Activated CD8-positive, alpha-beta T cell treated with anti-CD3 and anti-CD28 coated beads, Interleukin-2, amount 10 ng/mL, durations not matched to agents 7 days and 5 days (primary cell): ENCODE measurements at regions of chr11 and their contacts with region 1.

Region 1: DNA sequence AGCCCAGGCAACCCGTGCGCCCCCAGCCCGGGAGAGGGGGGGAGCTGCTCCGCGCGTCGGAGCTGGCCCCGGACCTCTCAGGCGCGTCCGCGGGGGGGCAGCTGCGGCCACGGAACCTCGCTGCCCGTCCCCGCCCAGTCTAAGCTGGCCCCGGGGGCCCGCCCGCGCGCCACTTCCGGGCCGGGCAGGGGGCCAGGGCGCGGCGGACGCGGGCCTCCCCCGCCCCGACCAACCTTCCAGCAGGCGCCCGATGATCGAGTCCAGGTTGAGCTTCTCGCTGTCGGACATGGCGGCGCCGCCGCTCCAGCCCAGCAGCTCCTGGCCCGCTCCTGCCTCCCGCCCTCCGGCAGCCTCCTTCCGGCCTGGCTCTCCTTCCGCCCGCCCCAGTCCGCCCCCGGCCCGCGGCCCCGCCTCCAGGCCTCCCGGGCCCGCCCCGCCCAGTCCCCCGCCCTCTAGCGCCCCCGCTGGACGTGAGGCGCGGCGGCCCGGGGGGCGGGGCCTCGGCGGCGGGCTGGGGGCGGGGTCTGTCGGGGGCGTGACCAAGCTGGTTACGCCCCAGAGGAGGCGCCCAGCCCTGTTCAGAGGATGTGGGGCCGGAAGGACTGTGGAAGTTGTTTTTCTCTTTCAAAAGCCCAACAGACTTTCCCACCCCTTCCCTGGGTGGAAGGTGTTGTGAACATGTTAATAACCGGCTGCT is at the start of gene PPP1CA:
- DNase-seq: peak; percentile 92
- ATAC-seq: peak; percentile 74
- H3K4me3 Mint-ChIP-seq: peak within 1 kb of the TSS; percentile 90
- H3K27ac Mint-ChIP-seq: peak within 1 kb of the TSS; percentile 93
- H3K4me1 Mint-ChIP-seq: peaks cover 65% of the 10 kb centered on the region
- H3K27me3 Mint-ChIP-seq: no peaks in the 10 kb centered on the region
- total RNA-seq, gene PPP1CA: 429 to 434 TPM

Region 2: GRCh38 chr11:67353317-67354074 is 48.1 kb before region 1 on chr11 and contains the start of gene POLD4:
- CTCF ChIA-PET with region 1: interaction called, 998 read pairs
- POLR2A ChIA-PET with region 1: interaction called, 7 read pairs
- DNase-seq: peak; percentile 96
- ATAC-seq: peak; percentile 92
- H3K4me3 Mint-ChIP-seq: peak within 1 kb of the TSS; percentile 93
- H3K27ac Mint-ChIP-seq: peak within 1 kb of the TSS; percentile 99
- H3K4me1 Mint-ChIP-seq: peaks cover 42% of the 10 kb centered on the region
- H3K27me3 Mint-ChIP-seq: peaks cover 12% of the 10 kb centered on the region
- total RNA-seq, gene POLD4: 53.2 to 56.7 TPM

Region 3: DNA sequence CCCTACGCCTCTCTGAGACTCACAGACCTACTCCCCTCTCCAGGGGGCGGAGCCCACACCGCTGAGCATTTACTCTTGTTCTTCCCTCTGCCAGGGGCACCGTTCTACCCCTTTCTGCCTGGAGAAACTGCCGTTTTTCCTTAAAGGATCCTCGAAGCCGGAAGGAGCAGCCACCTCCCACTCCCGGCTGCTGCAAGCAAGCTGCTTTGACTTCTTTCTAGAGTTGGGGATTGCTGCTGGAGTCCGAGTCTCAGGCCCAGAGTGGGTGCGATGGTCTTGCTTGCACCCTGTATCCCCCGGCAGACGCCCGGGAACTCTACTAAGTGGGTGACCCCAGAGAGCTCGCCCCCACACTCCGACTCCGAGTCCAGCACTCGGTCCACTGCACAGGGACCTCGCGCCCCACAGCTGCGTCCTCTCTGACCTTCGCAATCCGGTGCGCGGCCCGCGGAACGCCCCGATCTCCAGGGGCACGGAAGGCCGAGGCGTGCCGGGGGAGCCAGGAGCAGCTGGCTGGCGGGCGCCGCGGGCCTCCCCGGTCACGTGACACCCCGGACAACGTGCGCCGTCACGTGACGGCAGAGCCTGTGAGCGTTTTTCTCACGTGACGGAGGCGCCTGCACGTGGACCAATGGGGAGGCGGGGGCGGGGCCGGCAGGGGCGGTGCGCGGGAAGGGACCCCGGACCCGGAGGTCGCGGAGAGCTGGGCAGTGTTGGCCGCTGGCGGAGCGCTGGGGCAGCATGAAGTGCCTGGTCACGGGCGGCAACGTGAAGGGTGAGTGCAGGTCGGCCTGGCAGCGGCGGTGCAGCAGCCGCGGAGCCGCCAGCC is 10.1 kb before region 1 on chr11 and contains the start of gene RAD9A:
- CTCF ChIA-PET with region 1: interaction called, 32 read pairs
- POLR2A ChIA-PET with region 1: interaction called, 33 read pairs
- DNase-seq: peak; percentile 96
- ATAC-seq: peak; percentile 82
- H3K4me3 Mint-ChIP-seq: peak within 1 kb of the TSS; percentile 97
- H3K27ac Mint-ChIP-seq: peak within 1 kb of the TSS; percentile 83
- H3K4me1 Mint-ChIP-seq: peaks cover 51% of the 10 kb centered on the region
- H3K27me3 Mint-ChIP-seq: no peaks in the 10 kb centered on the region
- total RNA-seq, gene RAD9A: 59.5 to 60.4 TPM

Region 4: DNA sequence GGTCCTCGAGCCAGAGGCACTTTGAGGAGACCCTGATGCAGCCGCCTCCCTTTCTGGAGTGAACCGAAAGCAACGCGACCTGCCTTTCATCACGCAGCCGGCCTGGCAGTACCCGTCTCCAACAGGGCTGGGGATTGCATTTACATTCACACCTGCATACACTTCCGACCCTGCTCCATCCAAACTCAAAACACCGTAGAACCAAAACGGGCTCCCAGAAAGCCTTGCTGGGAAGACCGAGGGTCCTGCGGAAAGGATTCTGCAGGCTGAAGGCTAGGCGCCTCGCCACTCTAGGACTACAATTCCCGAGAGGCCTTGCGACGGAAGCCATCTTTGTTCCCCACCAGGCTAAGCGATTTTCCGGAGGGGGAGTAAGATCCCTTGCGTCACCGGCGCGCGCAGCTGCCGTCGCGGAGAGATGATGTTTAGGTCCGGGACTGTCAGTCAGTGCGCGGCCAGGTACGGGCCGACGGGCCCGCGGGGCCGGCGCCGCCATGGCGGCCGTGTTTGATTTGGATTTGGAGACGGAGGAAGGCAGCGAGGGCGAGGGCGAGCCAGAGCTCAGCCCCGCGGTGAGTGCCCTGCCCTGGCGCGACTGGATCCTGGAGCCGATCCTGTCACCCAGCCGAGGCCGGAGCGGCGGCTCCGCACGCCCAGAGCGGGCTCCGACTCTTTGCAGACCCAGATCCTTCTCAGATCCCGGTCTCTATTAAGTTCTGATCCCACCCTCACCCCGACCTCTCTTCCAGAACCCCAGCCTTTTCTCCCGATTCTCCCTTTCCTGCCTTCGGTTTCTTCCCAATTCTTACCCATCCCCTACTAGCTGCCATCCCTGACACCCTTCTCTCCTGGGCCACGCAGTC is 26.6 kb after region 1 on chr11 and contains the start of gene RPS6KB2:
- CTCF ChIA-PET with region 1: interaction called, 5 read pairs
- POLR2A ChIA-PET with region 1: interaction called, 48 read pairs
- DNase-seq: peak; percentile 100
- ATAC-seq: peak; percentile 94
- H3K4me3 Mint-ChIP-seq: peak within 1 kb of the TSS; percentile 98
- H3K27ac Mint-ChIP-seq: peak within 1 kb of the TSS; percentile 95
- H3K4me1 Mint-ChIP-seq: peaks cover 61% of the 10 kb centered on the region
- H3K27me3 Mint-ChIP-seq: no peaks in the 10 kb centered on the region
- total RNA-seq, gene RPS6KB2: 64.0 to 66.9 TPM

Region 5: GRCh38 chr11:67468835-67469811 is 67.5 kb after region 1 on chr11 and contains the start of gene TMEM134:
- CTCF ChIA-PET with region 1: interaction called, 13 read pairs
- POLR2A ChIA-PET with region 1: interaction called, 4 read pairs
- DNase-seq: peak; percentile 92
- ATAC-seq: peak; percentile 79
- H3K4me3 Mint-ChIP-seq: peak within 1 kb of the TSS; percentile 87
- H3K27ac Mint-ChIP-seq: peak within 1 kb of the TSS; percentile 83
- H3K4me1 Mint-ChIP-seq: peaks cover 37% of the 10 kb centered on the region
- H3K27me3 Mint-ChIP-seq: no peaks in the 10 kb centered on the region
- total RNA-seq, gene TMEM134: 39.6 to 42.5 TPM

Region 6: DNA sequence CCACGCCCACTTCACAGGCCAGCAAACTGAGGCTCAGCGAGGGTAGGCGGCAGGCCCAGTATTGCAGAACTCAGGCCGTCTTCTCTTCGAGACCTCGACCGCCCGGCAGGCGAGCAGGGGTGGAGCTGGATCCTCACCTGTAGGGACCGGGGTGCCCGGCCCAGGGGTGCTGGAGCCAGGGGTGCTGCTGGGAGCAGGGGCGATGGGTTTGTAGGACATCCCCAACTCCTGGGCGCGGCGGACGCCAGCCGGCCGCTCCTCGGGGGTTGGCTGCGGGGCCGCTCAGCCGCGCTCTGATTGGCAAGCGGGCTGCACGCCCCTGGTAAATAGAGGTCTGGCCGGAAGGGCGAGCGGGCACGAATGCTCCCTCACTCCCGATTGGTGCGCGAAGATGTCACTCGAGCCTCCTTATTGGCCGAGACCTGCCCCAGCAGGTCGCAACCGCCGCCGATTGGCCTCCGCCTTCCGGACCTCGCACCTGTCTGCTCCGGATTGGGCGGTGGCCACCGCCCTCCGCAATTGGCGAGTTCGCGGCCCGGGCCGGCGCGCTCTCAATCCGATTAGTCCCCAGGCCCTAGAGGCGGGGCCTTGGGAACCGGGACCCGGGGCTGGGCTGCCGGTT is 106.3 kb after region 1 on chr11 and contains the start of gene CDK2AP2:
- CTCF ChIA-PET with region 1: interaction called, 10 read pairs
- POLR2A ChIA-PET with region 1: interaction called, 8 read pairs
- DNase-seq: peak; percentile 99
- ATAC-seq: peak; percentile 83
- H3K4me3 Mint-ChIP-seq: peak within 1 kb of the TSS; percentile 89
- H3K27ac Mint-ChIP-seq: peak within 1 kb of the TSS; percentile 94
- H3K4me1 Mint-ChIP-seq: peaks cover 38% of the 10 kb centered on the region
- H3K27me3 Mint-ChIP-seq: peaks cover 8% of the 10 kb centered on the region
- total RNA-seq, gene CDK2AP2: 168 to 175 TPM